Thyroid gland (tissue), 4 donors: ENCODE measurements at regions of chr17 and their contacts with region 1.

Region 1: DNA sequence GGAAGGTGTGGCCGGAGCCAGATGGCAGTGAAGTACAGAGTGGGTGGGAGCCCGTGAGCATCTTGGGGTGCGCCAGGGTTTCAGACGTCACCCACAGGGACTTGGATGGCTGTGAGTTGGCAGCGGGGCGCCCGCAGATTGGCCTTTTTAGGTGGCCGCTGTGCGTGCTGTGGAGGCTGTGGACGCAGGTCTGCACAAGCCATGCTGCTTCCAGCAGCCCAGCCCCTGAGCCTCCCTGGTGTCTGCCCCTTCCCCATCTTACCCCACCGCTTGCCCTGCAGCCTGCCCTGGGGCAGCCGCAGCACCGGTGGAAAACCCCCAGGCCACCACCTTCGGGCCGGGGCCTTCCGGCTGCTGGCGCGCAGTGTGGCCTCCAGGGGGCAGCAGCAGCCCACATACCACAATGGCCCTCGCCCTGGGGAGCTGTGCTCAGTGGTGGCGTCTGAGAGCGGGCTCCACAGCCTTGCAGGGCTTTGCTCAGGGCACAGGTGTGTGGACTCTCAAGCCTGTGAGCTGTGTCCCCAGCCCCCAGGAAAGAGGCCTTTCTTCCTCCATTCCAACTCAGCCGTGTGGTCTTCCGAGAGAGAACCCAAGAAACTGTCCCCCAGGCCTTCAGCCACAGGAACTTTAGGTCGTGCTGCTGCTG is 11.8 kb downstream of the ENDOV start:
- DNase-seq: peak; percentile 58 to 72
- H3K4me3 ChIP-seq: no peak overlapping the region
- H3K27ac ChIP-seq: no peak overlapping the region
- H3K4me1 ChIP-seq: peaks cover 0 to 6% of the 10 kb centered on the region in 2 donors
- H3K27me3 ChIP-seq: no peaks in the 10 kb centered on the region
- CTCF ChIP-seq: peak; percentile 89 to 98 (median 94)
- POLR2A ChIP-seq: no peak

Region 2: DNA sequence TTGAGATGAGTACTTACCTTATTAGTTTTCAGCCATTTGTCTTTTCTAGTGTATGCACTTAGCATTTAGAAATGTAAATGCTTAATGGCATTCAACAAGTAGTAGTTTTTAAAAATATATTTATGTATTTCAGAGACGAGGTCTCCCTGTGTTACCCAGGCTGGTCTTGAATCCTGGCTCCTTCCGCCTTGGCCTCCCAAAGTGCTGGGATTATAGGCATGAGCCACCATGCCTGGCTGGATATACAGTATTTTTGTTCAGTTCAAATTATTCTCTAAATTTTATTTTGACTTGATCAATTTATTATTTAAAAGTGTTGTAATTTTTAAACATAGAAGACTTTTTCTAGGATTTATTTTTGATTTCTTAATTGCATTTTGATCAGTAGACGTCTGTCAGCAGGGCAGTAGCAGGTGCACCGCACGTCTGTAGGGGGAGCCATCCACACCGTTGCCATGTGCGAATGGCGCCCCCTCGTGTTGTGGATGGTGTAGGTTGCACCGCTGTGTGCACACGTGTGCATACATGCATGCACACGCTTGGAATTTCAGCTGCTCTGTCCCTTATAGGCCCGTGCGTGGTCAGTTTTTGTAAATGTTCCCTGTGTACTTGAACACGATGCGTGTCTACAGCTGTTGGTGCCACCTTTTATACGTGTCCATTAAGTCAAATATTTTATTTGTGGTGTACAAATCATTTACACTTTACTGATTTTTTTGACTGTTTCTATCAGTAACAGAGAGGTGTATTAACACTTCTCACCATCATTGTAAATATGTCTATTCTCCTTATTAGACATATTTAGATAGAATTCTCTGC is 148.5 kb after region 1 on chr17:
- intact Hi-C with region 1: loop called (anchors 5 kb)
- DNase-seq: peak; percentile 82 to 90
- H3K4me3 ChIP-seq: no peak overlapping the region
- H3K27ac ChIP-seq: no peak overlapping the region
- H3K4me1 ChIP-seq: no peaks in the 10 kb centered on the region
- H3K27me3 ChIP-seq: no peaks in the 10 kb centered on the region
- CTCF ChIP-seq: peak; percentile 87 to 99 (median 96)
- POLR2A ChIP-seq: no peak

Region 3: GRCh38 chr17:80866147-80866793 is 439.5 kb after region 1 on chr17:
- intact Hi-C with region 1: loop called (anchors 10 kb)
- DNase-seq: peak; percentile 45 to 66
- H3K4me3 ChIP-seq: no peak overlapping the region
- H3K27ac ChIP-seq: no peak overlapping the region
- H3K4me1 ChIP-seq: no peaks in the 10 kb centered on the region
- H3K27me3 ChIP-seq: no peaks in the 10 kb centered on the region
- CTCF ChIP-seq: peak in 5 of 6 experiments; percentile 13 to 79 (median 45)
- POLR2A ChIP-seq: no peak

Region 4: GRCh38 chr17:80981062-80981902 is 554.5 kb after region 1 on chr17:
- intact Hi-C with region 1: loop called (anchors 5 kb)
- DNase-seq: no peak
- H3K4me3 ChIP-seq: no peak overlapping the region
- H3K27ac ChIP-seq: no peak overlapping the region
- H3K4me1 ChIP-seq: peaks cover 4 to 7% of the 10 kb centered on the region in 2 donors
- H3K27me3 ChIP-seq: peaks cover 4% of the 10 kb centered on the region
- CTCF ChIP-seq: peak in 5 of 6 experiments; percentile 39 to 80 (median 71)
- POLR2A ChIP-seq: no peak

Region 5: GRCh38 chr17:81101614-81102306 is 675.0 kb after region 1 on chr17:
- intact Hi-C with region 1: loop called (anchors 10 kb)
- DNase-seq: peak; percentile 77 to 83
- H3K4me3 ChIP-seq: no peak overlapping the region
- H3K27ac ChIP-seq: no peak overlapping the region
- H3K4me1 ChIP-seq: peaks cover 6 to 13% of the 10 kb centered on the region in 2 donors
- H3K27me3 ChIP-seq: no peaks in the 10 kb centered on the region
- CTCF ChIP-seq: peak; percentile 96 to 100 (median 100)
- POLR2A ChIP-seq: no peak